Activated T-helper 1 cell treated with anti-CD3 and anti-CD28 coated beads, Interleukin-12 subunit alpha, Interleukin-12 subunit beta, Interleukin-2, Interleukin-4 antibody, amounts not matched to agents 30 ng/mL and 10 ng/mL and 1 ng/mL, durations not matched to agents 14 hours and 24 hours and 36 hours (primary cell): ENCODE measurements at regions of chr19 and their contacts with region 1.

Region 1: DNA sequence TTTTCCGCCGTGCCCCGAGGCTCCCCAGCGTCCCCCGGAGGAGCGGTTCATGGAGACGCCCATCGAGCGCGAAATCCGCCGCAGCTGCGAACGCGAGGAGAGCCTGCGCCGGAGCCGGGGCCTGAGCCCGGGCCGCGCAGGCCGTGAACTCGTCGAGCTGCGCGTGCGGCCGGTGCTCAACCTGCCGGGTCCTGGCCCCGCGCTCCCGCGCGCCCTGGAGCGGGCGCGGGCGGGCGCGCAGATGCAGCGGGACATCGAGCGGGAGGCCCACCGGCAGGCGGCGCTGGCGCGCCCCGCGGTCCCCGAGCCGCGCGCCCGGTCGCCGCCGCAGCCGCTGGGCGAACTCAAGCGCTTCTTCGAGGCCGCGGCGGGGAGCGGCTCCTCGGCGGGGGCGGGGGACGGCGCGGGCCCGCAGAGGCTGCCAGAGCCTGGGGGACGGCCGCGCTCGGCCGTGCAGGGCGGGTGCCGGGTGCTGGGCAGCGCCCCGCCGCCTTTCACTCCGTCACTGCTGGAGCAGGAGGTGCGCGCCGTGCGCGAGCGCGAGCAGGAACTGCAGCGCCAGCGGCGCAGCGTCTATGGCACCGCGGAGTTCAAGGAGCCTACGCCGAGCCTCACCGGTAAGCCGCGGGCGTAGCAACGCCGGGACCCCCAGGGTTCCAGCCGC is 807 bp downstream of the MISP3 start:
- DNase-seq: peak; percentile 78
- H3K4me3 Mint-ChIP-seq: peak overlapping the region; percentile 97
- H3K27ac Mint-ChIP-seq: peak overlapping the region; percentile 98
- H3K4me1 Mint-ChIP-seq: peaks cover 16% of the 10 kb centered on the region
- H3K27me3 Mint-ChIP-seq: peaks cover 5% of the 10 kb centered on the region

Region 2: DNA sequence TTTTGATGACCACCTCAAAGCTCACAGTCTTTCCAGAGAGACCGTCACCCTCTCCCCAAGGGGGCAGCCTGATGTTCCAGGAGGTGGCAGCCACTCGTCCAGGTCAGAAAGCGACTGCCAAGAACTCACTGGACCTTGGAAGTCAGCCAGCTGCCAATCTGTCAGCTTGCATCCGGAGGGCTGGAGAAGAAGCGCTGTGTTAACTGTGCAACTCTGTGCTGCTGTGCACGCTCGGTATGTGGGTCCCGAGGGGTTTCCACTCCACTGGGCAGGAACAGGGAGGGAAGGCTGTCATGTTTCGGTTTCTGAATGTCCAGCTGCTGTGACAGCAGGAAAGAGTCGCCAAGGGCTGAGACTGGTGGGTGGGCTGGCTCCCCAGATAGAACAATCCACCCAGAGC is 656.3 kb before region 1 on chr19:
- intact Hi-C with region 1: no loop called
- DNase-seq: no peak
- H3K4me3 Mint-ChIP-seq: no peak overlapping the region
- H3K27ac Mint-ChIP-seq: no peak overlapping the region
- H3K4me1 Mint-ChIP-seq: no peaks in the 10 kb centered on the region
- H3K27me3 Mint-ChIP-seq: no peaks in the 10 kb centered on the region

Region 3: GRCh38 chr19:13952154-13953035 is 121.0 kb before region 1 on chr19 and contains the start of gene DCAF15:
- intact Hi-C with region 1: loop called (anchors 2 kb)
- DNase-seq: peak; percentile 99
- H3K4me3 Mint-ChIP-seq: peak within 1 kb of the TSS; percentile 96
- H3K27ac Mint-ChIP-seq: peak within 1 kb of the TSS; percentile 86
- H3K4me1 Mint-ChIP-seq: peaks cover 17% of the 10 kb centered on the region
- H3K27me3 Mint-ChIP-seq: no peaks in the 10 kb centered on the region
- total RNA-seq, gene DCAF15: 57.8 and 61.5 TPM in 2 replicates

Region 4: GRCh38 chr19:13986348-13986904 is 87.0 kb before region 1 on chr19:
- intact Hi-C with region 1: loop called (anchors 2 kb)
- DNase-seq: peak; percentile 96
- H3K4me3 Mint-ChIP-seq: peak overlapping the region; percentile 56
- H3K27ac Mint-ChIP-seq: peak overlapping the region; percentile 88
- H3K4me1 Mint-ChIP-seq: peaks cover 48% of the 10 kb centered on the region
- H3K27me3 Mint-ChIP-seq: no peaks in the 10 kb centered on the region

Region 5: DNA sequence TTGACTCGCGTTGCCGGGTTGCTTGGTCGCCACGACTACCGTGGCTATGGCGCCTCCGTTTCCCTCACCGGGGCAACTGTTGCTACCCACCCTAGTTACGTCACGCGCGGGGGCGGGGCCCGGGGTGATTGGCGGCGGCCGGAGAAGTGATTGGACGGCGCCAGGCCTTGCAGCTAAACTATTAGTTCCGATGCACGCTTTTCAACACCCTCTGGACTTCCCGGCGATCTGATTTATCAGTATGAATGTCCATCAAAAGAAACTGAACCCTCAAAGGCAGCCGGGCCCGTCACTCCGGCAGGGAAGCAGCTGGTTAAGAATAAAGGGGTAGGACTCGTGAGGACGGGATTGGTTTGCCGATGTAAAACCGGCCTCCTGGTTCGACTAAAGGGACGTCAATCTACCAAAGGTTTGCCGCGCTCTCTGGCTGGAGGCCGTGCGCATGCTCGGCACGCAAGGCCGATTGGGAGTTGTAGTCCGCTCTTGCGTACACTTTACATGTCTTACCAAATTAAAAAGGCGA is 67.1 kb before region 1 on chr19 and contains the start of gene RFX1:
- intact Hi-C with region 1: no loop called
- DNase-seq: peak; percentile 99
- H3K4me3 Mint-ChIP-seq: peak within 1 kb of the TSS; percentile 87
- H3K27ac Mint-ChIP-seq: peak within 1 kb of the TSS; percentile 99
- H3K4me1 Mint-ChIP-seq: peaks cover 35% of the 10 kb centered on the region
- H3K27me3 Mint-ChIP-seq: peaks cover 2% of the 10 kb centered on the region
- total RNA-seq, gene RFX1: 16.0 and 17.0 TPM in 2 replicates

Region 6: GRCh38 chr19:14031719-14032480 is 41.5 kb before region 1 on chr19 and contains the start of gene IL27RA:
- intact Hi-C with region 1: loop called (anchors 2 kb)
- DNase-seq: peak; percentile 78
- H3K4me3 Mint-ChIP-seq: peak within 1 kb of the TSS; percentile 95
- H3K27ac Mint-ChIP-seq: peak within 1 kb of the TSS; percentile 96
- H3K4me1 Mint-ChIP-seq: peaks cover 13% of the 10 kb centered on the region
- H3K27me3 Mint-ChIP-seq: peaks cover 3% of the 10 kb centered on the region
- total RNA-seq, gene IL27RA: 82.5 and 84.9 TPM in 2 replicates

Region 7: DNA sequence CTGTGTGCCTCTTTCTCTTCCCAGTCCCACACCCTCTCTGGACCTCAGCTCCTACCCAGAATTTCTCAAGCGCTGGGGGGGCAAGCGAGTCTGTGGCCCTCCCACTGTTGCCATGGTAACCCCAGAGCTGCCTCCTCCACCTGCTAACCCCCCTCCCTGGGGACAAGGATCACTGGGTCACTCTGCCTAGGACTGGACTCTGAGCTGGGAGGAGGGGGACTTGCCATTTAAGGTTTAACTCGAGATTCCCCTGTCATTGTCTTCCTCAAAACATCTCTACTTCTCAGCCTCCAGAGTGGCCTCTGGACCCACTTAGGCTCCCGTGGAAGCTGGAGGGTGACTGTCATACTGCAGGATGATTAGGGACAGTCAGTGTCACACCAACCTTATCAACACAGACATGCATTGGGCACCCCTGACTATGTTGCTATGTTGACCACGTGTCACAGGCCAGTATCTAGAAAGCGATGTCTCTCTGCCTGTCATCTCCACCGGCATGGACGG is 13.7 kb before region 1 on chr19:
- intact Hi-C with region 1: loop called (anchors 1 kb)
- DNase-seq: no peak
- H3K4me3 Mint-ChIP-seq: no peak overlapping the region
- H3K27ac Mint-ChIP-seq: no peak overlapping the region
- H3K4me1 Mint-ChIP-seq: peaks cover 19% of the 10 kb centered on the region
- H3K27me3 Mint-ChIP-seq: peaks cover 37% of the 10 kb centered on the region

Region 8: DNA sequence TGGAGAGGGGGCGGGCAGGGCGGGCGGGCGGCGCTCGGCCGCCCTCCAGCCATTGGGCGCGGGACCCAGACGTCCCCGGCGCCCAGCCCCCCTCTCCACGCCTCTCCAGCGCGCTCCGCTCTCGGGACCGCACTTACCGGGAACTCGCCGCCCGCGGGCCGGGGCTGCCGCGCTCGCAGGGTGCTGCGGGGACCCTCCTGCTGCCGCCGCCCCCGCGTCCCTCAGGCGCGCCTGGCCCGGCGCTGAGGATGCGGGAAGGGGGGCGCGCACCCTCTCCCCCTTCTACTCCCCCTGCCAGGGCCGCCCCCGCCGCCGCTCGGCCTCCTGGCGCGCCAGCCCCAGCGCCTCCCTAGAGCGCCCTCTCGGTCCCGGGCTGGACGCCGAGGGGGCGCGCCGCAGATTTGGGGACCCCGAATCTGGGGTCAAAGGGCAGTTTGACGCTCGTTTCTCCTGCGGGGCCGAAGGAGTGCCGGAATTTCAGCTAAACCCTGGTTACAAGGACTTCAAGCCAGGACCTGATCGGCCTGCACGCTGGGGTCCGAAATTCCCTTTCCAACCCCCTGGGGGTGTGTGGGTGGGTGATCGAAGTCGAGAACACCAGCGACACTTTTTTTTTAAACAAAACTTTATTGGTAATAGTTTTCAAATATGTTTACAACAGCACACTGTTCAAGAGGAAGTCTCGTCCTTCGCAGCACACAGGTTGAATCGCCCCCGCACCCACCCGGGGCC is 17.9 kb after region 1 on chr19:
- intact Hi-C with region 1: loop called (anchors 2 kb)
- DNase-seq: peak; percentile 74
- H3K4me3 Mint-ChIP-seq: peak overlapping the region; percentile 99
- H3K27ac Mint-ChIP-seq: peak overlapping the region; percentile 100
- H3K4me1 Mint-ChIP-seq: peaks cover 16% of the 10 kb centered on the region
- H3K27me3 Mint-ChIP-seq: no peaks in the 10 kb centered on the region